AG04450 (cell line): ENCODE measurements at regions of chr9 and their contacts with region 1.

Region 1: DNA sequence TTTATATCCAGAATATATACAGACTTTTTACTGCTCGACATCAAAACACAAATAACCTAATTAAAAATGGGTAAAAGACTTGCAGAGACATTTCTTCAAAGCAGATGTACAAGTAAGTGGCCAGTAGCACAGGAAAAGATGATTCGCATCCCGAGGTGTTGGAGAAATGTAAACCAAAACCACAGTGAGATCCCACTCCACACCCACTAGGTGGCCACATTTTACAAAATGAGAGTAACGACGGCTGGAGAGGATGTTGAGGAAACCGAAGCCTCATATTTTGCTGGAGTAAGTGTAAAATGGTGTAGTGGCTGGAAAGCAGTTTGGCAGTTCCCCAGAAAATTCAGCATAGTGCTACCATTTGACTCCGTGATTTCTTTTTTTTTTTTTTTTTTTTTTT is 21.2 kb upstream of the GBGT1 start:
- DNase-seq: peak; percentile 15
- H3K4me3 ChIP-seq: no peak overlapping the region
- H3K27ac ChIP-seq: no peak overlapping the region
- H3K27me3 ChIP-seq: peaks cover 40% of the 10 kb centered on the region
- CTCF ChIP-seq: peak; percentile 57

Region 2: DNA sequence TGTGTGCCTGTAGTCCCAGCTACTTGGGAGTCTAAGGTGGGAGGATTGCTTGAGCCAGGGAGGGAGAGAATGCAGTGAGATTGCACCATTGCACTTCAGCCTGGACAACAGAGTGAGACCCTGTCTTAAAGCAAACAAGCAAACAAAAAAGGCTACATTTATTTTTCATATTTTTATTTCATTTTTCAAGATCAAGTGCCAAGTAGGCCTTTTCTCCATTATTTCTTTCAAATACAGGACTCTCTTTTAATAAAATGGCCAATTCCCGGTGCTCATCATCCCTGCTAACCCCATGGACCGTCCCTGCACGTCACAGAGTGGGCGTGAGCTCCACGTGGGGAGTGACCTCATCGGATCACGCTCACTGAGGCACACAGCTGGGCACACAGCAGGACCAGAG is 11.9 kb before region 1 on chr9:
- CTCF ChIA-PET with region 1: interaction called, 25 read pairs
- POLR2A ChIA-PET with region 1: no interaction called
- DNase-seq: no peak
- H3K4me3 ChIP-seq: no peak overlapping the region
- H3K27ac ChIP-seq: no peak overlapping the region
- H3K27me3 ChIP-seq: peaks cover 38% of the 10 kb centered on the region
- CTCF ChIP-seq: no peak

Region 3: GRCh38 chr9:133331221-133331620 is 146.3 kb after region 1 on chr9:
- CTCF ChIA-PET with region 1: interaction called, 12 read pairs
- POLR2A ChIA-PET with region 1: no interaction called
- DNase-seq: no peak
- H3K4me3 ChIP-seq: no peak overlapping the region
- H3K27ac ChIP-seq: no peak overlapping the region
- H3K27me3 ChIP-seq: no peaks in the 10 kb centered on the region
- CTCF ChIP-seq: no peak

Region 4: GRCh38 chr9:133368249-133368881 is 183.4 kb after region 1 on chr9:
- CTCF ChIA-PET with region 1: no interaction called
- POLR2A ChIA-PET with region 1: no interaction called
- DNase-seq: no peak
- H3K4me3 ChIP-seq: no peak overlapping the region
- H3K27ac ChIP-seq: no peak overlapping the region
- H3K27me3 ChIP-seq: no peaks in the 10 kb centered on the region
- CTCF ChIP-seq: no peak

Region 5: DNA sequence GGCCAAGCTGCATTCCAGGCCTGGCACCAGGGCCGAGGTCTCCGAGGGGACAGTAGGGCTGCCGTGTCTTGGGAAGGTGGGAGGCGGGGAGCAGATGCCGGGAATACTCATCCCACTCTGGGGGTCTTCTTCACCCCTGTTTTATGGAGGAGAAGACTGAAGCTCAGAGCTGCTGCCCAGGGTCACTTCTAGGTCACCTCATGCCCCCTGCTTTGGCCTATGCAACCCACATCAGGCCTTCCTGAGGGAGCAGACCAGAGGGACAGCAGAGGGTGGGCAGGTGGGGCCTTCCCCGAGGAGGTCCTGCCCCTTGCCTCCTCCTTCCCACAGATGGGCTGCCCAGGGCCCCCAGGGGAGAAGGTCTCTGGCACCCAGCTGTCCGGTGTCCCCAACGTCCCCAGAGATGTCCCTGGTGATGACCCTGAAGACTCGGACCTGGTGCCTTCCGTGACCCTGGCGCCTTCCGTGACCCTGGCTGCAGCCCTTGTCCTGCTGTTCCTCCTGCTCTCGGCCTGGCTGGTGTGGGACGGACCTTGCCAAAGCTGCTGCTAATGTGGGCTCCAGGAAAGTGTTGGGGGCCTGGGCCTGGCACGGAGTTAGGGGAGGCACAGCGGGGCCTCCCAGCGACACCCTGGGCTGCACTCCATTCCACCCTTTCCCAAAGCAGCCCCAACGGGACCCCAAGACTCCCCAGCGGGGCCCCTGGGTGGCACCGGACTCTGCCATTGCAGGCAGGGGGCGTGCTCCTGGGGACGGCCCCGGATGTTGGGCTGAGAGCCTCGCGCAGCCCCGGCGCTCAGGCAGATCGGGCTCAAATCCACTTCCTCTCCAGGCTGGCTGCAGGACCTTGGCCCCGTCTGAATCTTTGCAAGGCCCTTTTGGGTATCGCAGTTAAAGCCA is 300.6 kb after region 1 on chr9:
- CTCF ChIA-PET with region 1: interaction called, 25 read pairs
- POLR2A ChIA-PET with region 1: interaction called, 3 read pairs
- DNase-seq: no peak
- H3K4me3 ChIP-seq: no peak overlapping the region
- H3K27ac ChIP-seq: no peak overlapping the region
- H3K27me3 ChIP-seq: peaks cover 20% of the 10 kb centered on the region
- CTCF ChIP-seq: no peak